CD4-positive, alpha-beta T cell (primary cell): ENCODE measurements at regions of chr12 and their contacts with region 1.

Region 1: DNA sequence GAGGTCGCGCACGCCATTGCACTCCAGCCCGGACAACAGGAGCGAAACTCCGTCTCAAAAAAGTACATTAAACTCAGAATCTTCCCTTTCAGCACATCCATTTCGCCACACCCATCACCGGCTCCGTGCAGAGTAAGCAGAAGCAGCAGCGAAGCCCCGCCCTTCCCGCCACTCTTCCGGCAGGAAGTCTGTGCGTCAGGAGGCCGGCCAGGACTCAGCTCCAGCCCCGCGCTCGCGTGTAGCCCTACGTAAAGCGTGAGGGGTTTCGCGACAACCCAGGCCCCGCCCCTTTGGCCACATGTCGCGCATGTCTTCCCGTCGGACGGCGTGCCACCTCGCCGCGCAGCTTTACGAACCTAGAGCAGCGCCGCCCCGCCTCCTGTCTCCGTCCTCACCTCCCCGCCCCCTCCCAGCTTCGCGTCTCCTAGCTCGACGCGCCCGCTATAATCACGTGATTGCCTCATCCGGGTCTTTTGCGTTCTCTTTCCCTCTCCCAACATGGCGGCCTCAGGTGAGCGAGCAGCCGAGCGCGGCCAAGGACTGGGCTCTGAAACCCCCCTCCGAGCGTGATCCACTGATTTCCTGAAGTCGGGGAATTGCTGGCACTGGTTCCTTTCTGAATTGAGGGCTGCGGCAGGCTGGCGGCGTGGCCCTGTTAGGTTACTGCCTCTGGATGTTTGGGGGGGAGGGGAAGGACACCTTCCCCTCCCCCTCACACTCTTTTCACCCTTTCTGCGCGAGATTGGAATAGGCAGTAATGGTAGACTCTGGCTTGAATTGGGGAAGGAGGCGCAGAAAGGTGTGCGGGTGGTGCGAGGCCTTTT is at the start of gene EIF4B:
- DNase-seq: peak; percentile 98 to 100 (median 99)
- ATAC-seq: peak; percentile 85
- H3K4me3 ChIP-seq: peak within 1 kb of the TSS; percentile 100
- H3K4me3 Mint-ChIP-seq: peak within 1 kb of the TSS; percentile 99
- H3K27ac ChIP-seq: peak within 1 kb of the TSS; percentile 90 to 97
- H3K27ac Mint-ChIP-seq: peak within 1 kb of the TSS; percentile 99
- H3K4me1 ChIP-seq: peaks cover 50% of the 10 kb centered on the region
- H3K4me1 Mint-ChIP-seq: peaks cover 57% of the 10 kb centered on the region
- H3K27me3 ChIP-seq: no peaks in the 10 kb centered on the region
- H3K27me3 Mint-ChIP-seq: no peaks in the 10 kb centered on the region
- CTCF ChIP-seq: no peak
- total RNA-seq, gene EIF4B: 794 to 806 TPM

Region 2: DNA sequence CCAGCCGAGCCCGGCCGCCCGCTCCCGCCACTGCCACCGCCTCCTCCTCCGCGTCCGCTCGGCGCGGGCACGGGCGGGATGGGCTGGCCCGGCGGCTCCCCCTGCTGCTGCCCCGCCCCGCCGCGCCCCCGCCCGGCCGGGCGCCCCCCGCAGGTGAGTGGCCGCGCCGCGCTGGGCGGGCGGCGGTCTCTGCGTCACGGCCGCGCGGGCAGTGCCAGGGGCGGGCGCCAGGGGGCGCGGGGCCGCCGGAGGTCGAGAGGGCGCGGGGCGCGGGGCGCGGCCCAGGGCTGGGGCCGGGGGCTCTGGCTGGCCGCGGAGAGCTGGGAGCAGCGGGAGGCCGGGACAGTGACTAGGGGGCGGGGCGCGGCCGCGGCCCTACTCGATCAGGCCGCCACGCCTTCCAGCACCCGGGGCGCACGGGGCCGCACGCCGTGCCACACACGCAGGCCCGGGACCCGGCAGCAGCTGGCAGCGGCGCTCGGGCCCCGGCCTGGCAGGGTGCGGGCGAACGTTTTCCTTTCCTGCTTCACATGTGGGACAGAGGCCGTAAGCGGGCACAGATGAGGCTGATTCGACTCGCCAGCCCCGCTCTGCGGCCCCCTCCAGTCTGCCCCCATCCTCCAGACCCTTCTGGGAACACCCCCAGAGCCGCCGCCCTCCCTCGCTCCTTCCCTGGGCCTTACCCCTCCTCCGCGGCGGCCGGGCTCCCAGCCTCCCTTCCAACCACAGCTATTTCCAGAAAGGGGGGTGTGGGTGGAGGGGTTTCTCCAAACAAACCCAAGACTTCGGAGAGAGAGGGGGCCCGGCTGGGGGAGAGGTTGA is 41.2 kb after region 1 on chr12:
- CTCF ChIA-PET with region 1: interaction called, 5 read pairs
- POLR2A ChIA-PET with region 1: interaction called, 8 read pairs
- intact Hi-C with region 1: loop called in 1 of 2 experiments (anchors 5 kb)
- DNase-seq: peak; percentile 45 to 90 (median 64)
- ATAC-seq: peak; percentile 79
- H3K4me3 ChIP-seq: peak overlapping the region; percentile 93
- H3K4me3 Mint-ChIP-seq: peak overlapping the region; percentile 76
- H3K27ac ChIP-seq: peak overlapping the region; percentile 56 to 76
- H3K27ac Mint-ChIP-seq: peak overlapping the region; percentile 96
- H3K4me1 ChIP-seq: peaks cover 21% of the 10 kb centered on the region
- H3K4me1 Mint-ChIP-seq: peaks cover 25% of the 10 kb centered on the region
- H3K27me3 ChIP-seq: no peaks in the 10 kb centered on the region
- H3K27me3 Mint-ChIP-seq: no peaks in the 10 kb centered on the region
- CTCF ChIP-seq: no peak

Region 3: GRCh38 chr12:53054112-53054833 is 48.1 kb after region 1 on chr12:
- CTCF ChIA-PET with region 1: no interaction called
- POLR2A ChIA-PET with region 1: interaction called, 10 read pairs
- intact Hi-C with region 1: loop called in 1 of 2 experiments (anchors 5 kb)
- DNase-seq: peak; percentile 85 to 97 (median 91)
- ATAC-seq: peak; percentile 89
- H3K4me3 ChIP-seq: peak overlapping the region; percentile 85
- H3K4me3 Mint-ChIP-seq: peak overlapping the region; percentile 96
- H3K27ac ChIP-seq: peak overlapping the region; percentile 21 to 65
- H3K27ac Mint-ChIP-seq: peak overlapping the region; percentile 92
- H3K4me1 ChIP-seq: peaks cover 17% of the 10 kb centered on the region
- H3K4me1 Mint-ChIP-seq: peaks cover 15% of the 10 kb centered on the region
- H3K27me3 ChIP-seq: no peaks in the 10 kb centered on the region
- H3K27me3 Mint-ChIP-seq: no peaks in the 10 kb centered on the region
- CTCF ChIP-seq: no peak

Region 4: DNA sequence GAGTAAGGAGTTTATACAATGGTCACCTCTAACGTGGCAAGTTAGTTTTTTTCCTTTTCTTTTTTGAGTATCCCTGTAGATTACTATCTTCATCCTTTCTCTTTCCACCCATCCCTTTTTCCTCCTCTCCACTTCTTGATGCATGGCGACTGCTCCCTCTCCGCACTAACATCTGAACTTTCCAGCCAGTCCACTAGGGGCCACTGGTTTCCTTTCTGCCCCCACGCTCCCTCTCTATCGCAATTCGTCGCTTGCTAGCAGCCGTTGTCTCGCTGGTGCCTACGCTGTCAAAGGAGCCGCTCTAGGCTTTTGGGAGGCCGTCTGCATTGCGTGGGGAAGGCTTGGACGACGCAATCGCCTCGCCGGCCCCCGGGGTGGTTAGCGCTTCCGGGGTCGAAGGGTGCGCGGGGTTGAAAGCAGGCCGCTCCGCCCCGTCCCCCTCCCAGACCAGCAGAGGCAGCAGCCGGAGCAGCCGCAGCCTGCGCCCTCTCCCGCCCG is 445.5 kb after region 1 on chr12 and contains the start of gene PCBP2:
- CTCF ChIA-PET with region 1: no interaction called
- POLR2A ChIA-PET with region 1: no interaction called
- intact Hi-C with region 1: loop called in 1 of 2 experiments (anchors 10 kb)
- DNase-seq: peak; percentile 93 to 99 (median 97)
- ATAC-seq: peak; percentile 93
- H3K4me3 ChIP-seq: peak within 1 kb of the TSS; percentile 86
- H3K4me3 Mint-ChIP-seq: peak within 1 kb of the TSS; percentile 98
- H3K27ac ChIP-seq: peak within 1 kb of the TSS; percentile 93
- H3K27ac Mint-ChIP-seq: peak within 1 kb of the TSS; percentile 89
- H3K4me1 ChIP-seq: peaks cover 16% of the 10 kb centered on the region
- H3K4me1 Mint-ChIP-seq: peaks cover 46% of the 10 kb centered on the region
- H3K27me3 ChIP-seq: no peaks in the 10 kb centered on the region
- H3K27me3 Mint-ChIP-seq: no peaks in the 10 kb centered on the region
- CTCF ChIP-seq: peak; percentile 87
- total RNA-seq, gene PCBP2: 1,331 to 1,359 TPM

Region 5: DNA sequence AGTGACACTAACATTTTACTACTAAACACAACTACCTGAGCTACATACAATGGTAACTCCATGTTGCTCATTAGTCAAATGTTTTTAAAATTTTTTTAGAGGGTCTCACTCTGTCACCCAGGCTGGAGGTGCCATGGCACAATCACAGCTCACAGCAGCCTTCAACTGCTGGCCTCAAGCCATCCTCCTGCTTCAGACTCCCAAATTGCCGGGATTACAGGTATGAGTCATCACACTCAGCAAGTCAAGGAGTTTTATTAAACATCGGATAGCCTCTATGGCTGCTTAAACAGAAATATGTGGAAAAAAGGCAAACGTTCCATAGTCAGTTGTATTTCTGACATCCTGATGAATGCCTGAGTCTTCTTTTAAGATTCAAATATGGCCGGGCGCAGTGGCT is 512.2 kb after region 1 on chr12:
- CTCF ChIA-PET with region 1: no interaction called
- POLR2A ChIA-PET with region 1: no interaction called
- intact Hi-C with region 1: no loop called
- DNase-seq: no peak
- ATAC-seq: no peak
- H3K4me3 ChIP-seq: no peak overlapping the region
- H3K4me3 Mint-ChIP-seq: no peak overlapping the region
- H3K27ac ChIP-seq: no peak overlapping the region
- H3K27ac Mint-ChIP-seq: no peak overlapping the region
- H3K4me1 ChIP-seq: no peaks in the 10 kb centered on the region
- H3K4me1 Mint-ChIP-seq: no peaks in the 10 kb centered on the region
- H3K27me3 ChIP-seq: no peaks in the 10 kb centered on the region
- H3K27me3 Mint-ChIP-seq: no peaks in the 10 kb centered on the region
- CTCF ChIP-seq: no peak

Region 6: DNA sequence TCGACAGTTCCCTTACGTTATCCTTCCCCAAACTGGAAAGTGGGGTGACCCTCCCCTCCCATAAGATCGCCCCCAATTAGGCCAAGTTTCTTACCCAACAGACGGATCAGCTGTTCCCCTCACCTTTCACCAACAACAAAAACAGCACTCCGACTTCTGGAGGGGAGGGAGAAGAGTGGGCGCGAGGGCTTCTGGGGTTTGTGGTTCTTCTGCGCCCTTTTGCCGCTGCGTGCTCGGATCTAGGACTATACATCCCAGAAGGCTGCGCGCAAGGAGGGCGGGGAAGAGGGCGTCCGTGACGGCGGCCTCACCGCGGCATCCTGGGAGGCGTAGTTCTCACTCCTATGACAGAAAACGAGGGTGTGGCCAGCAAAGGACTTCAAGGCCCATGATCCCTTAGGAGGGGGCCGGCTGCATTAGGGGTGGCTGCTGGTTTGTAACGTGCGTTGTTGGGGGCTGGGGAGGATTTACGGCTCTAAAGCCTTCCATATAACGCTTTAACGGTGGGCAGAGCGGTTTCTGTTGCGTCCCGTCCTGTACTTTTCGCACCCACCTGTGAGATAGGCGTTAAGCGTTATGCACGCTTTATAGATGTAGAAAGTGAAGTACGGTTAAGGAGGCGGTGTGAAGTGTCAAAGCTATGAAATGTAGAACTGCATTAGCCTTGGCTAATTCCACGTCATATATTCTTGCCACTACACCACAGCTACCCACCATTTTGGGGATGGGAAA is 721.3 kb after region 1 on chr12 and contains the start of gene CALCOCO1:
- CTCF ChIA-PET with region 1: no interaction called
- POLR2A ChIA-PET with region 1: no interaction called
- intact Hi-C with region 1: loop called in 1 of 2 experiments (anchors 5 kb)
- DNase-seq: peak; percentile 89 to 99 (median 96)
- ATAC-seq: peak; percentile 98
- H3K4me3 ChIP-seq: peak within 1 kb of the TSS; percentile 73
- H3K4me3 Mint-ChIP-seq: peak within 1 kb of the TSS; percentile 92
- H3K27ac ChIP-seq: peak within 1 kb of the TSS; percentile 42 to 52
- H3K27ac Mint-ChIP-seq: peak within 1 kb of the TSS; percentile 82
- H3K4me1 ChIP-seq: peaks cover 27% of the 10 kb centered on the region
- H3K4me1 Mint-ChIP-seq: peaks cover 34% of the 10 kb centered on the region
- H3K27me3 ChIP-seq: no peaks in the 10 kb centered on the region
- H3K27me3 Mint-ChIP-seq: no peaks in the 10 kb centered on the region
- CTCF ChIP-seq: no peak
- total RNA-seq, gene CALCOCO1: 66.8 to 69.3 TPM